ENCODE measurements at regions of chr1 and their contacts with region 1.

Region 1: GRCh38 chr1:199089393-199090122 is 450.7 kb downstream of the PTPRC start:
- DNase-seq: no peak
- H3K4me3 ChIP-seq: no peak overlapping the region
- H3K27ac ChIP-seq: no peak overlapping the region
- H3K27me3 ChIP-seq: no peaks in the 10 kb centered on the region
- CTCF ChIP-seq: no peak

Region 2: DNA sequence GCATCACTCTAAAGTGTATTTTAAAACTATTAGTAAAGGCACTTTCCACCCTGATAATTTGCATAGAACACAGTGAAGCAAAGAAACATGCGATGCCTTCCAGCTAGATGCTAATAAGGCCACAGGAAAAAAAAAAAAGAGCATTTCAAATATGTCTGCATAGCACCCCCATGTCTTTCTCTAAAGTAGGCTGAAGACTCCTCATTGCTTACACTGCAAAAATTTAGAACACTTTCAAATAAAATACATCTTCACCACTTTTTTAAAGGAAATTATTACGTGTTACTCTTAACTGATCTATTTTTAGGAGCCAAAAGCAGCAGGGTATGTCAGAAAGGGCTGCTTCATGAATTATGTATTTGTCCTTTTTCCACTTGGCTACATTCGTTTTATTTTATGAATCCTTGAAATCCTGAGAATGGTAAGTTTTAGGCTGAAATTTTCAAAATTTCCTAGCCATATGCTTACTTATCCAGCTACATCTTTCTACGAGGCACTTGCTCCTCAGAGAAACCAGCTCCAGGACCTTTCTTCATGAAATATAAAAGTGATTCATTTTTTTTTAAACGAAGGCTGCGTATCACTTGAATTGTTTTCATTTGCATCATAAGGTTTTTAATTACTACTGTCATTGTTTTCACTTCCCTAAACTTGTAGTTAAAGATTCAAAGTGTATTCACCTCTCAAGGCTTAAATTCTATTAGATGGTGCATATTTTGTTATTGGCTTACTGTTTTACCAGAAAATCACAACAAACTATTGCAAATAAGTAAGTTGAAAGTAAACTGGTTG is 62.3 kb after region 1 on chr1:
- intact Hi-C with region 1: loop called in 1 of 2 experiments (anchors 2 kb)
- DNase-seq: no peak
- H3K4me3 ChIP-seq: peak overlapping the region in 41 of 59 donors; percentile 2 to 55 (median 22)
- H3K27ac ChIP-seq: no peak overlapping the region
- H3K27me3 ChIP-seq: no peaks in the 10 kb centered on the region
- CTCF ChIP-seq: no peak